Heart right ventricle (tissue), 16 donors: ENCODE measurements at regions of chr15 and their contacts with region 1.

Region 1: GRCh38 chr15:62138124-62138523 is 27.0 kb downstream of the C2CD4B start:
- DNase-seq: no peak
- ATAC-seq: peak in 1 of 8 donors; percentile 41
- H3K4me3 ChIP-seq: no peak overlapping the region
- H3K27ac ChIP-seq: peak overlapping the region in 1 of 10 donors; percentile 20
- H3K4me1 ChIP-seq: peaks cover 0 to 10% (median 0%) of the 10 kb centered on the region in 9 donors
- H3K27me3 ChIP-seq: no peaks in the 10 kb centered on the region
- CTCF ChIP-seq: no peak

Region 2: DNA sequence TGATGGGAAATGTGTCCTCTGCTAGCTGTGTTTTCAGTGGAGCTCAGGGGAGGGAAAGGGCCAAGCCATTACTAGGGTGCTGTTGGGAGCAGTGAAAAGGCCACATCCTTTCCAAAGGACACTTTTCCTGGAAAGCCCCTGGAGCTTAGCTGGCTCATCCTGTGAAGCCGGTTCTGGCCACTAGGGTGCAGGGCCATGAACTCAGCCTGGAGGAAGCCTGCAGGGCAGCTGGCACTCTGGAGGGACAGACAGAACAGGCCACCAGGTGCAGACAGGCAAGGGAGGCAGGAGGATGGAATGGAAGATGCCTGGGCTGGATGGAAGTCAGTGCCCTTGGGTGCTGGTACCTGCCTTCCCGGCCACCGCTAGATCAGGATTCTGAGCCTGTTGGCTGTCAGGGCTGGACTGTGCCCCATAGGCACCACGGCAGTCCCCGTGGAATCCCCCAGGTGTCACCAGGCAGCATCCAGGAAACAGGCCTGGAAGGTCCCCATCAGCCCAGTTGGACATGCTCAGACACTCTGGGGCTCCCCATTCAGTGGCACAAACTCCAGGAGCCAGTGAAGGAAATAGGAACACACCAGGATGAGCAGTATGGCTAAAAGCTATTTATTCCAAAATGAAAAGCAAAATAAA is 103.1 kb after region 1 on chr15:
- intact Hi-C with region 1: loop called in 1 of 10 experiments (anchors 10 kb)
- DNase-seq: no peak
- ATAC-seq: no peak
- H3K4me3 ChIP-seq: no peak overlapping the region
- H3K27ac ChIP-seq: no peak overlapping the region
- H3K4me1 ChIP-seq: no peaks in the 10 kb centered on the region
- H3K27me3 ChIP-seq: no peaks in the 10 kb centered on the region
- CTCF ChIP-seq: peak in 7 of 9 donors; percentile 15 to 36 (median 30)

Region 3: GRCh38 chr15:62287066-62287857 is 149.1 kb after region 1 on chr15:
- intact Hi-C with region 1: loop called in 1 of 10 experiments (anchors 1 kb)
- DNase-seq: no peak
- ATAC-seq: no peak
- H3K4me3 ChIP-seq: no peak overlapping the region
- H3K27ac ChIP-seq: no peak overlapping the region
- H3K4me1 ChIP-seq: no peaks in the 10 kb centered on the region
- H3K27me3 ChIP-seq: peaks cover 0 to 37% (median 18%) of the 10 kb centered on the region in 7 donors
- CTCF ChIP-seq: no peak